HepG2 (cell line): ENCODE measurements at regions of chr2 and their contacts with region 1.

Region 1: DNA sequence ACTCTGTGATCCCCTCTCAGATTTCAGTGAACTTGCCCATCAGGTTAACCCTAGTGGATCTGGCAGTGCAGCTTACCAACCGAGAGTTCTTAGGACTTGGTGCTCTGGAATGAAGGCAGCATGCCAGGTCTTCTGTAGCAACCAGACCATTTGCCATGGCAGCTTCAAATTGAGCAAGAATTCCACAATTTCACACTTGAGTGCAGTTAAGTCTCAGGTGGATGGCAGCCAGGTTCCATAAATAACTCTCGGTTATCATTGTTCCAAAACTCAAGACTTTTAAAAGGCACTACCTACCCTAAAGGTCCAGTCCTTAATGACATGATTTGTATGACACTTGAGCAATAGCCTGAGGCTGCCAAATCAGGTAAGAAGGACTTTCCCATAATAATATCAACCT is 48.1 kb downstream of the GALNT3 start:
- DNase-seq: no peak
- ATAC-seq: no peak
- H3K4me3 ChIP-seq: no peak overlapping the region
- H3K27ac ChIP-seq: no peak overlapping the region
- H3K4me1 ChIP-seq: no peaks in the 10 kb centered on the region
- H3K27me3 ChIP-seq: no peaks in the 10 kb centered on the region
- CTCF ChIP-seq: no peak
- EP300 ChIP-seq: no peak
- POLR2A ChIP-seq: no peak
- RAD21 ChIP-seq: no peak

Region 2: DNA sequence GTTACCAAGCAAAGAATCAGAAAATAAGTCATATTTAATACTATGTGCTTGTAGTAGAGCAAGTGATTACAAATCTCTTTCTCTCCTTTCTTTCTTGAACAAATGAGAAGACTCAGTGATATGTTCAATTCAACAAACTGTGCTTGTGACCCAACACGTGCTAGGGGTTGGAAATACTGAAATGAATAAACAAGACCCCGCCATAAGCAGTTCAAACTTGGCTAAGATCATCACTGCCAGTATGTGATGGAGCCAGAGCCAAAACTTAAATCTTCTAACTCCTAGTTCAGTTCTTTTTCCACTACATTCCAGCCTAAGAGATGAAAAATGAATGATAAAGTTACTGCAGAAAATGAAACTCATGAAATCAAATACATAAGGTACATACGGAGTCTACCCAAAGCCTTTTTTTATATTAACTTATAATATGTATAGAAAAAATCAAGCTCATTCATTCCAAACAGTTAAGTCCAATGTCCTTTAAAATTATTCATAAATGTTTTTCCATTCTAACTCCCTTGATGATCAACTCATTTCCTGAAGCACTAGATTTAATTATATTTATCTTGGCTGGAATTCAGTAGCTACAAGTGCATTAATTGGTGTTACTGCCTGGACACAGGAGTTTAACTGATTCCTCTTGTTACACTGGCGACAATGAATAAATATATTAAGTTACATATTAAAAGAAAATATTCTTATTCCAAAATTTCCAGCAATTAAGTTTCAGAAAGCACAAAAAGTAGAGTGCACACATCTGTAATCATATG is 12.2 kb after region 1 on chr2:
- CTCF ChIA-PET with region 1: no interaction called
- POLR2A ChIA-PET with region 1: no interaction called
- in situ Hi-C with region 1: no loop called
- intact Hi-C with region 1: loop called (anchors 2 kb)
- DNase-seq: no peak
- ATAC-seq: no peak
- H3K4me3 ChIP-seq: no peak overlapping the region
- H3K27ac ChIP-seq: no peak overlapping the region
- H3K4me1 ChIP-seq: no peaks in the 10 kb centered on the region
- H3K27me3 ChIP-seq: peaks cover 0 to 7% of the 10 kb centered on the region in 2 experiments; a peak in 1 of 5 replicates
- CTCF ChIP-seq: no peak
- EP300 ChIP-seq: no peak
- POLR2A ChIP-seq: no peak
- RAD21 ChIP-seq: no peak

Region 3: DNA sequence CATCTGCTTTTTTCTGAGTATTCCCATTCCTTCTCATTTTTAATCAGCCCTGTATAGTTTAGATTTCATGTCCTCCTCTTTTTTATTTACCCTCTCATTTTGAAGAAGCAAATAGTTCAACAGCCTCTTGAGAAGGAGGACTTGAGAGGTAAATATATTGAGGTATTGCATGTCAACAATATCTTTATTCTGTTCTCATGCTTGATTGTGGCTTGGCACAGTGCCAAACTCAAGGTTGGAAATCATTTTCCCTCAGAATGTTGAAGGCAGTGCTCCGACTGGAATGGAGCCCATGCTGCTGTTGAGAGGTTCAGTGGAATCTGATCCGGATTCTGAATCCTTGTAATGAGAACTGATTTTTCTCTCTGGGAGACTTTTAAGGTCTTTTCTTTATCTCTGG is 79.1 kb after region 1 on chr2:
- CTCF ChIA-PET with region 1: no interaction called
- POLR2A ChIA-PET with region 1: no interaction called
- in situ Hi-C with region 1: no loop called
- intact Hi-C with region 1: no loop called
- DNase-seq: no peak
- ATAC-seq: no peak
- H3K4me3 ChIP-seq: no peak overlapping the region
- H3K27ac ChIP-seq: no peak overlapping the region
- H3K4me1 ChIP-seq: no peaks in the 10 kb centered on the region
- H3K27me3 ChIP-seq: no peaks in the 10 kb centered on the region
- CTCF ChIP-seq: no peak
- EP300 ChIP-seq: no peak
- POLR2A ChIP-seq: no peak
- RAD21 ChIP-seq: no peak